Tibial artery (tissue), 4 donors: ENCODE measurements at regions of chr2 and their contacts with region 1.

Region 1: DNA sequence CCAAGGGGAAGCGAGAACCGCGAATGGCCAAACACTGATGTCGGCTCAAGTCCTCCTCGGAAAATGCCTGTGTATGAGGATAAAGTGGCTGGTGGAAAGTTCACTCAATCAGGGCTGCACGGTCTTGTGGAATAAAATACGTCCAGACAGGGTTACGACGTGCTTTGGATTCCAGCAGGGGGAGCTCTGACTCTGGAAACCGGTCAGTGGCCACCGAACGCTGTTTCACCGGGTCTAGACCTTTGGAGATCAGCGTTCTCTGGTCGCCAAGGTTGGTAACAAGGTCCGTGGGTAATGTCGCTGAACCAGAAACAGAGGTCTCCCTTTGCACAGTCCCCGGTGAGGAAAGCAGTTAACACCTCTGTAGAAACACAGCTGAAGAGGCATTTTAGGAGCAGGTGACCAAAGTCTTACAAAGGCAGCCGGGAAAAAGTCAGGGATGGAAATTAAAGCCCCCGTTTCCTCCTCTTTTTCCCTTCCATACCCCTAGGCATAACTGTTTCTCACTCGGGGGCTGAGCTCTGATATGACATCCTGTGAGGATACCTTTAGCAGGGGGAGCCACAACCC is 47.8 kb downstream of the CDCA7 start:
- DNase-seq: peak; percentile 60 to 80
- H3K4me3 ChIP-seq: no peak overlapping the region
- H3K27ac ChIP-seq: no peak overlapping the region
- H3K4me1 ChIP-seq: peaks cover 0 to 18% (median 9%) of the 10 kb centered on the region in 4 donors
- H3K27me3 ChIP-seq: peaks cover 0 to 51% of the 10 kb centered on the region in 2 donors
- CTCF ChIP-seq: peak; percentile 83 to 89

Region 2: DNA sequence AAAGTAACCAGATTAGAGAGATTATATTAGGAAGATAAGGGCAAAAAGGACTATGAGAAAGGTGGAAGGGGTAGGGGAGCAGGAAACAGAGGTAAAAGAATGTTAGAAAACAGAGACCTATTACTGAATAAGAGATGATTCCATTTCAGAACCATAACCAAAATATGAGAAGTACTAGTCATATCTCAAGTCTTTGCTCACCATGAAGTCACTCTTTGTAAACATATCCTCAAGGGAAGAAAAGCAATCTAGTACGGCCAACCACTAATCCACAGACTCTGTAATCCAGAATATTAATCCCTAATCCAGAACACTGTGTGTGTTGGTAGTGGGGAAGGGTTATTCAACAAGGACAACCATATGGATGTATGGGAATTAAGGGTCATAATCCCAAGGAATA is 44.2 kb after region 1 on chr2:
- intact Hi-C with region 1: loop called (anchors 1 kb)
- DNase-seq: no peak
- H3K4me3 ChIP-seq: no peak overlapping the region
- H3K27ac ChIP-seq: no peak overlapping the region
- H3K4me1 ChIP-seq: peaks cover 0 to 6% (median 0%) of the 10 kb centered on the region in 4 donors
- H3K27me3 ChIP-seq: no peaks in the 10 kb centered on the region
- CTCF ChIP-seq: no peak

Region 3: GRCh38 chr2:174376967-174377366 is 974.5 kb after region 1 on chr2:
- intact Hi-C with region 1: no loop called
- DNase-seq: no peak
- H3K4me3 ChIP-seq: no peak overlapping the region
- H3K27ac ChIP-seq: no peak overlapping the region
- H3K4me1 ChIP-seq: no peaks in the 10 kb centered on the region
- H3K27me3 ChIP-seq: no peaks in the 10 kb centered on the region
- CTCF ChIP-seq: no peak